ENCODE measurements at regions of chr6 and their contacts with region 1.

Region 1: GRCh38 chr6:26216356-26216885 is 129.2 kb downstream of the HFE start:
- DNase-seq: peak; percentile 87
- ATAC-seq: peak; percentile 80
- H3K4me3 Mint-ChIP-seq: no peak overlapping the region
- H3K27ac Mint-ChIP-seq: no peak overlapping the region
- H3K4me1 Mint-ChIP-seq: peaks cover 11% of the 10 kb centered on the region
- H3K27me3 Mint-ChIP-seq: no peaks in the 10 kb centered on the region
- CTCF ChIP-seq: no peak

Region 2: DNA sequence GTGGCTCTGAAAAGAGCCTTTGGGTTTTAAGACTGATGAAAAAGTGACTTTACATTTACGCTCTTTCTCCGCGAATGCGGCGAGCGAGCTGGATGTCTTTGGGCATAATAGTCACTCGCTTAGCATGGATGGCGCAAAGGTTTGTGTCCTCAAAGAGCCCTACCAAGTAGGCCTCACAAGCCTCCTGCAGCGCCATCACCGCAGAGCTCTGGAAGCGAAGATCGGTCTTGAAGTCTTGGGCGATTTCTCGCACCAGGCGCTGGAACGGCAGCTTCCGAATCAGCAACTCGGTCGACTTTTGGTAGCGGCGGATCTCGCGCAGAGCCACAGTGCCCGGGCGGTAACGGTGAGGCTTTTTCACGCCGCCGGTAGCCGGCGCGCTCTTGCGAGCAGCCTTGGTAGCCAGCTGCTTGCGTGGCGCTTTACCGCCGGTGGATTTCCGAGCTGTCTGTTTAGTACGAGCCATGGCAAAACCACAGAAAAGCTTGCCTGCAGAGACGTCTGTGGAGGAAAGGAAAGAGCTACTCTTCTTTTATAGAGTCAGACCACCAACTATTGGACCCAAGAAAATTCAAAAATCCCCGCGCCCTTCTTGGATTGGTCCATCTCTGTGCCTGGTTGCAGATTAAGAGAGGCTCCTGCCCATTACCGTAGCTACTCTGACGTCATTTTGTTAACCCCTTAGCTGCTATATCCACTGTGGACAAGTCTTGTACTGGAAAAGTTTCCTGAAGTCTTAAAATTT is 184.7 kb before region 1 on chr6:
- CTCF ChIA-PET with region 1: no interaction called
- POLR2A ChIA-PET with region 1: interaction called, 11 read pairs
- intact Hi-C with region 1: no loop called
- DNase-seq: peak; percentile 95
- ATAC-seq: peak; percentile 66
- H3K4me3 Mint-ChIP-seq: peak overlapping the region; percentile 91
- H3K27ac Mint-ChIP-seq: peak overlapping the region; percentile 98
- H3K4me1 Mint-ChIP-seq: peaks cover 50% of the 10 kb centered on the region
- H3K27me3 Mint-ChIP-seq: peaks cover 3% of the 10 kb centered on the region
- CTCF ChIP-seq: no peak

Region 3: DNA sequence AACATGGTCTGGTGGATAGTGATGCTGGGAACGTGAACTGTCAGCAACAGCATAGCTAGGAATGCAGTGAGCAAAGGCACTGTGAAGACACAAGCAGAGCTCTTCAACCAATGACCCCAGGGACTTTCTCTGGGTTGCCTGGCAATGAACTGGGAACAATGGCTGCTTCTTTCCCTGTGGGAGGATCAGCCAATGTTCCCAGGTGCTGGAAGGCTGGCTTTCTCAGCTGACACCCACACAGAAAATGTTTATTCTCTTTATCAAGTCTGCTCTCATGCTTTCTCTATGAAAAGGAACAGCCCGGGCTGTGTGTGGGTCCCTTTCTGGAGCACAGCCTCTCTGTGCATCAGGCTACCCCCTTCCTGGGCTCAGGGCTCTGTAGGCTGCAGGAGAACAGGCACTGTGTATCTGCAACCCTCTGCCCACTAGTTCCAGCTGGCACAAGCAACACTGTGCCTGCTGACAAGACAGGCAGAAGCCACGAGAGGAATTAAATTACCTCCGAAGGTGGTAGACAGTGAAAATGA is 75.0 kb before region 1 on chr6:
- CTCF ChIA-PET with region 1: no interaction called
- POLR2A ChIA-PET with region 1: no interaction called
- intact Hi-C with region 1: no loop called
- DNase-seq: no peak
- ATAC-seq: no peak
- H3K4me3 Mint-ChIP-seq: no peak overlapping the region
- H3K27ac Mint-ChIP-seq: no peak overlapping the region
- H3K4me1 Mint-ChIP-seq: no peaks in the 10 kb centered on the region
- H3K27me3 Mint-ChIP-seq: no peaks in the 10 kb centered on the region
- CTCF ChIP-seq: no peak

Region 4: DNA sequence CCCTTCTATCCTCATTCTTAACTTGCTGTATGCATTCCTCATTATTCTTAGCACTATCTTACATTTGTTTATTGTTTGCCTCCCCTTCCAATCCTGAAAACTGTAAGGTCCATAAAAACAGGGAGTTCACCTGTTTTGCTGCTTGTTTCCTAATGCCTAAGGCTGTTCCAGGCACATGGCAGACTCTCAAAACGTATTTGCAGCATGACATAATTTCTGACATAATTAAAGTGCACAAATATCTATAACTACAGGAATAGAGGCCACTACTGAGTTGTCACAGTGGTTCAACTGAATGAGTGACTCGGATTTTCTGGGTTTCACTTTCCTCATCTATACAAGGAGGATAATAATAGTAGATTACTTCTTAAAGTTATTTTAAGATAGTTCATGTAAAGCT is 46.2 kb before region 1 on chr6:
- CTCF ChIA-PET with region 1: interaction called, 5 read pairs
- POLR2A ChIA-PET with region 1: interaction called, 23 read pairs
- intact Hi-C with region 1: no loop called
- DNase-seq: no peak
- ATAC-seq: no peak
- H3K4me3 Mint-ChIP-seq: peak overlapping the region; percentile 97
- H3K27ac Mint-ChIP-seq: peak overlapping the region; percentile 99
- H3K4me1 Mint-ChIP-seq: peaks cover 46% of the 10 kb centered on the region
- H3K27me3 Mint-ChIP-seq: no peaks in the 10 kb centered on the region
- CTCF ChIP-seq: no peak

Region 5: DNA sequence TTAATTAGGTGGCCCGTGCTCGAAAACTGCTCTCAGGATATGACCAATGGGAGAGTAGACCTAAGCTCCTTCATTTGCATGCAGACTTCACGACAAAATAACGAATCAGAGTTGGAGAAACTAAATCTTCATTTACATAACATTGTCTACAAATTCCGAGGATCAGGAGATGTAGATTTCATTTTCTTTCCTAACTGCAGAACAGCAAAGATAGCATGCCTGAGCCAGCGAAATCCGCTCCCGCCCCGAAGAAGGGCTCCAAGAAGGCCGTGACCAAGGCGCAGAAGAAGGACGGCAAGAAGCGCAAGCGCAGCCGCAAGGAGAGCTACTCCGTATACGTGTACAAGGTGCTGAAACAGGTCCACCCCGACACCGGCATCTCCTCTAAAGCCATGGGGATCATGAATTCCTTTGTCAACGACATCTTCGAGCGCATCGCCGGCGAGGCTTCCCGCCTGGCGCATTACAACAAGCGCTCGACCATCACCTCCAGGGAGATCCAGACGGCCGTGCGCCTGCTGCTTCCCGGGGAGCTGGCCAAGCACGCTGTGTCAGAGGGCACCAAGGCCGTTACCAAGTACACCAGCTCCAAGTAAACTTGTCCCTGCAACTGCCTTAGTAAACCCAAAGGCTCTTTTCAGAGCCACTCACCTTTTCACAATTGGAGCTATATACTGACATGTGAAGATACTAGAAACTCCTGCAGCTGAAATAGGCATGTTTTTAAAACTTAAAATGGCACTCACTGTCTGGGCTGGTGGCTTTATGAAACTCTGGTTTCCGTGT is 32.6 kb before region 1 on chr6:
- CTCF ChIA-PET with region 1: interaction called, 8 read pairs
- POLR2A ChIA-PET with region 1: interaction called, 883 read pairs
- intact Hi-C with region 1: no loop called
- DNase-seq: peak; percentile 72
- ATAC-seq: peak; percentile 82
- H3K4me3 Mint-ChIP-seq: peak overlapping the region; percentile 76
- H3K27ac Mint-ChIP-seq: peak overlapping the region; percentile 84
- H3K4me1 Mint-ChIP-seq: peaks cover 38% of the 10 kb centered on the region
- H3K27me3 Mint-ChIP-seq: no peaks in the 10 kb centered on the region
- CTCF ChIP-seq: no peak

Region 6: DNA sequence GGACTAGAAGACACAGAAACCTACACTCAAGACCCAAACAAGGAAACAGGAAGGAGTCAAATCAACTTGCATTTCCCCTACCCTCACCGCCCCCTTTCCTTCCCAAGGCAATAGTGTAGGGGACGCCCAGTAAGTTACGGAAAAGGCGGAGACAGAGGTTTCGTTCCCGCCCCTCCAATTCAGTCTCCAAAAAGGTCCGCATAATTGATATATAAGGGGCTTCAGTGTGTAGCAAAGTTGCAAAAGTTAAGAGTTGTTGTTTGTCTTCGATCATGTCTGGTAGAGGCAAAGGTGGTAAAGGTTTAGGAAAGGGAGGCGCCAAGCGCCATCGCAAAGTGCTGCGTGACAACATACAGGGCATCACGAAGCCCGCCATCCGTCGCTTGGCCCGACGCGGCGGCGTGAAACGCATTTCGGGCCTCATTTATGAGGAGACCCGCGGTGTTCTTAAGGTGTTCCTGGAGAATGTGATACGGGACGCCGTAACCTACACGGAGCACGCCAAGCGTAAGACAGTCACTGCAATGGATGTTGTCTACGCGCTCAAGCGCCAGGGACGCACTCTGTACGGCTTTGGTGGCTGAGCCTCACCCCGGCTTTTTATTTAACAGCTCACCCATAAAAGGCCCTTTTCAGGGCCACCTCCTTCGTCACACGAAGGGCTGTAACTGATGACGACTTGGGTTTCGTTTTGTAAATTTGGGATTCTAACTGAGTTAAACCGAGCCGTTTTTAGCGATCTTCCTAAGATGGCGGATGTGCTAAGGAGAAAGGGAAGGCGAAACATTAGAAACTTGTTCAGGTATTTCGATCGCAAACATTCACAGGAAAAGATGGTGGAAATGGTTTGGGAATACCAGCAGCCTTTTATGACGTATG is 24.0 kb after region 1 on chr6:
- CTCF ChIA-PET with region 1: interaction called, 12 read pairs
- POLR2A ChIA-PET with region 1: interaction called, 237 read pairs
- intact Hi-C with region 1: no loop called
- DNase-seq: peak; percentile 88
- ATAC-seq: peak; percentile 82
- H3K4me3 Mint-ChIP-seq: peak overlapping the region; percentile 77
- H3K27ac Mint-ChIP-seq: peak overlapping the region; percentile 92
- H3K4me1 Mint-ChIP-seq: peaks cover 32% of the 10 kb centered on the region
- H3K27me3 Mint-ChIP-seq: no peaks in the 10 kb centered on the region
- CTCF ChIP-seq: no peak

Measured in activated CD8-positive, alpha-beta T cell treated with anti-CD3 and anti-CD28 coated beads for 36 hours (primary cell).